Left lung (tissue), 14 donors: ENCODE measurements at regions of chr14 and their contacts with region 1.

Region 1: DNA sequence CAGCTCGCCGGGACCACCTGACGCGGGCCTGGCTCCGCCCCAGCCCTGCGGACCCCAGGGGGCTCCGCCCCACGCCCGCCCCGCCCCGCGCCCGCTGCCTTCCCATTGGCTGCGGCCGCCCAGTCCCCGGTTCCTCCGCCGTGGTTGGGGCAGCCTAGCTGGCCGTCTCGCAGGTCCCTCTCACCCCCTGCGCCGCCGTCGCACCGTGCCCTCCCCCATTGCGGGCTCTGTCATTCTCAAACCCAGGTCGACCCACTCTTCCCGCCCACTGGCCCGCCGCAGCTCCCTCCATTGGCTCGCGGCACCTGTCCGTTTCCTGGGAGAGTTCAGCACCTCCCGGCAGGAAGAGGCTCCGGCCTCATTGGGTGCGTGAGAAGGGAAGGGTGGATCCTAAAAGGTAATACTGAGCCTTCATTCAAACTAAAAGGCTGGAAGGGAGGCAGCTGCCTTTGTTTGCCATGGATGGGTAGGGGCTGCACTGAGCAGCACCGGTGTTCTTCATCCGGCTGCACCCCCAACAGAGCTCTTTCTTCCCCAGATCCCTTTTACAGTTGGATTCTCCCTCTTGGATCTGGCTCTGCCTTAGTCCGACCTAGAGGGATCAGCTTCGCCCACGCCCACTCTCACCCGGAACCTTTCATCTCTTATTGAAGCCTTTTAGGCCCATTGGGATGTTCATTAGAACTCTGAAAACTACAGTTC is 381 bp upstream of the MAP3K9 start:
- DNase-seq: peak; percentile 60 to 97 (median 93)
- ATAC-seq: peak; percentile 92
- H3K4me3 ChIP-seq: peak overlapping the region; percentile 59 to 77
- H3K27ac ChIP-seq: peak overlapping the region in 1 of 2 donors; percentile 23
- H3K4me1 ChIP-seq: peaks cover 3 to 16% of the 10 kb centered on the region in 2 donors
- H3K27me3 ChIP-seq: peaks cover 16 to 70% of the 10 kb centered on the region in 2 donors
- CTCF ChIP-seq: no peak

Region 2: DNA sequence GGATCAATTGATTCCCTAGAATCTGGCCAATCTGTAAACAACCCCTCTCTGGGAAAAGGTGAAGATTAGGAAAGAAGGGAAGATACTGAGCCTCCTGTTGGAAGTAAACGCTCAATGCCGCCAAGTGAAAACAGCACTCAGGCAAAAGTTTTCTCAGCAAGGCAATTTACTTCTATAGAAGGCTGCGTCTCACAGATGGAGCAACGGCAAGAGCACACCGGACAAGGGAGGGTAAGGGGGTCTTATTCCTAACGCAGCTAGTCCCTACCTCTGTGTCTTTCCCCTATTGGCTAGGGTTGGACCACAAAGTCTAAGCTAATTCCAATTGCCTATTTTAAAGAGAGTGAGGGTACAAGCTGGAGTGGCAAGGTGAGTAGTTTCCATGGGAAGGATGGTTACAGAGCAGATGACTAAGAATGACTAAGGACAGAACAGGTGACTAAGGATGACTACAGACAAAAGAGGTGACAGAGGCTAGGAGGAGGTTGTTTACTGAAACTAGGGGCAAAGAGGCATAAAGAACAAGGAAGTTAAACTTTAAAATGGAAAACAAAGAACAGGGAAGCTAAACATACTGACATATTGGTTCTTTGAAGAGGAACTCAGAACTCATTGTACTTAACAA is 173.6 kb before region 1 on chr14:
- intact Hi-C with region 1: loop called in 1 of 2 experiments (anchors 10 kb)
- DNase-seq: no peak
- ATAC-seq: no peak
- H3K4me3 ChIP-seq: no peak overlapping the region
- H3K27ac ChIP-seq: no peak overlapping the region
- H3K4me1 ChIP-seq: peaks cover 0 to 7% of the 10 kb centered on the region in 2 donors
- H3K27me3 ChIP-seq: peaks cover 0 to 24% of the 10 kb centered on the region in 2 donors
- CTCF ChIP-seq: no peak